Panc1 (cell line): ENCODE measurements at regions of chr3 and their contacts with region 1.

Region 1: DNA sequence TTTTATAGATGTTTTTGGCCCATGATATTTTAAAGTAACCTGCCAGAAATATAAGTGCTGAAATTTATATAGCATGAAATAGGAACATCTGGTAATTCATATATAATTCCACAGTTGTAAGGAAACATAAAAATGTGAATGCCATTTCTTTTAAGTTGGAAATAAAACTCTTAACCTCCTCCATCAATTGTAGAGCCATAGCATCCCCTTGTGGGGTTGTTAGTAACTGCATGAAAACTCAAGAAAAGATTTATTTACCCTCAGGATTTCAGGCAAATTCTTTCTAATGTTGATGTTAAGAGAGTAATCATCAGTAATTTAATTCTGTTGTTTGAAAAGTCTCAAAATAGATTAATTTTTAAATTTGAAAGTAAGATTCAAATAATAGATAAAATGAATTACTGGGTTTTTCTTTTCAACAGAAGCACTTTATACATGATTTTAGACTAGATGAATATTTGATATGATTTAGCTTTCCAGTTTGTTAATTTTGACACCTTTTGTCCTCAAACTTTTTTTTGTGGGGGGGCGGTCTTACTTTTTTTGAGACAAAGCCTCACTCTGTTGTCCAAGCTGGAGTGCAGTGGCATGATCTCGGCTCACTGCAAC is 74.7 kb downstream of the RASA2 start:
- DNase-seq: peak; percentile 60
- ATAC-seq: no peak
- H3K4me3 ChIP-seq: no peak overlapping the region
- H3K27ac ChIP-seq: no peak overlapping the region
- H3K4me1 ChIP-seq: no peaks in the 10 kb centered on the region
- H3K27me3 ChIP-seq: no peaks in the 10 kb centered on the region
- CTCF ChIP-seq: peak; percentile 97; the same call in 1 of the 2 replicates

Region 2: GRCh38 chr3:141460097-141460704 is 101.3 kb before region 1 on chr3:
- CTCF ChIA-PET with region 1: interaction called, 19 read pairs
- POLR2A ChIA-PET with region 1: no interaction called
- in situ Hi-C with region 1: no loop called
- intact Hi-C with region 1: loop called (anchors 1 kb)
- DNase-seq: peak; percentile 73
- ATAC-seq: peak; percentile 99
- H3K4me3 ChIP-seq: no peak overlapping the region
- H3K27ac ChIP-seq: no peak overlapping the region
- H3K4me1 ChIP-seq: no peaks in the 10 kb centered on the region
- H3K27me3 ChIP-seq: no peaks in the 10 kb centered on the region
- CTCF ChIP-seq: peak; percentile 98